GM18951 (cell line): ENCODE measurements at regions of chr12 and their contacts with region 1.

Region 1: GRCh38 chr12:8890313-8891085 is 23.8 kb upstream of the PHC1 start:
- POLR2A ChIP-seq: no peak

Region 2: DNA sequence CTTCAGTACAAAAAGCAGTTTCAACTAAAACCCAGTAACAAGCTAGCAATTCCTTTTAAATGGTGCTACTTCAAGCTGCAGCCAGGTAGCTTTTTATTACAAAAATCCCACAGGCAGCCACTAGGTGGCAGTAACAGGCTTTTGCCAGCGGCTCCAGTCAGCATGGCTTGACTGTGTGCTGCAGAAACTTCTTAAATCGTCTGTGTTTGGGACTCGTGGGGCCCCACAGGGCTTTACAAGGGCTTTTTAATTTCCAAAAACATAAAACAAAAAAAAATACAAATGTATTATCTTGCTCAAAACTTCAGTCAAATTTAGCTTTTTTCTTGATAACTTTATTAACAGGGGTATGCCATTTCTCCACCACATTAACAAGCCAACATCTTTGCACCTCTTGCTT is 346.2 kb before region 1 on chr12:
- in situ Hi-C with region 1: loop called (anchors 25 kb)
- POLR2A ChIP-seq: no peak

Region 3: DNA sequence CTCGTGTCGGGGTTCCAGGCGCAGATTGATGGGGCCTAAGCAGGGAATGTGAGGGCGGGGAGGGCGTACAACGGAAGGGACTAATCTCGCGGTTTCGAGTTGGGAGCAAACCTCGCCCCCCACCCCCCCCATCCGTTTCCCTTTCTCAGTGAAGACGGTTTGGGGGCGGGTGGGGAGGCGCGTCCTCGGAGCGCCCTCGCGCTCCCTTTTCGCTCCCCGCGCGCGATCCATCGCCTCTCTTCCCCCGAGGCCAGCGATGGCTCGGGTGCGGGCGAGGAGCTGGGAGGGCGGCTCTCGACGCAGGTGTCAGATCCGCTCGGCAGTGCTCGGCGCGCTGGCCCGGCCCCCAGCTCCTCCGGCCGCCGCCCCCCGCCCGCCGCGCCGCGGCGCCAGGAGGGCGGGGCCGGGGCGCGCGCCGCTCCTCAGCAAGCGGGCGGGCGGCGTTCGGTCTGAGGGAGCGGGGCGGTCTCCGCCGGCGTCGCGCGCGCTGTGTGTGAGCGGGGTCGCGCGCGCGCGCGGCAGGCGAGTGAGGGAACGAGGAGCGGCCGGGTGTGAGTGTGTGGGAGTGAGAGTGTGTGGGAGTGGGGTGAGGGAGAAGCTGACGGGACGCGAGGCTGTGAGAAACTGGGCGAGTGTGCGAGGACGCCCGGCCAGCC is 192.9 kb before region 1 on chr12 and contains the start of gene RIMKLB:
- in situ Hi-C with region 1: loop called (anchors 25 kb)
- POLR2A ChIP-seq: peak; percentile 25

Region 4: GRCh38 chr12:8734873-8735381 is 155.6 kb before region 1 on chr12:
- in situ Hi-C with region 1: no loop called
- POLR2A ChIP-seq: no peak

Region 5: GRCh38 chr12:8969861-8970412 is 79.4 kb after region 1 on chr12:
- in situ Hi-C with region 1: no loop called
- POLR2A ChIP-seq: no peak

Region 6: GRCh38 chr12:9118158-9118557 is 227.7 kb after region 1 on chr12:
- in situ Hi-C with region 1: no loop called
- POLR2A ChIP-seq: no peak